Naive thymus-derived CD4-positive, alpha-beta T cell (primary cell): ENCODE measurements at regions of chr2 and their contacts with region 1.

Region 1: DNA sequence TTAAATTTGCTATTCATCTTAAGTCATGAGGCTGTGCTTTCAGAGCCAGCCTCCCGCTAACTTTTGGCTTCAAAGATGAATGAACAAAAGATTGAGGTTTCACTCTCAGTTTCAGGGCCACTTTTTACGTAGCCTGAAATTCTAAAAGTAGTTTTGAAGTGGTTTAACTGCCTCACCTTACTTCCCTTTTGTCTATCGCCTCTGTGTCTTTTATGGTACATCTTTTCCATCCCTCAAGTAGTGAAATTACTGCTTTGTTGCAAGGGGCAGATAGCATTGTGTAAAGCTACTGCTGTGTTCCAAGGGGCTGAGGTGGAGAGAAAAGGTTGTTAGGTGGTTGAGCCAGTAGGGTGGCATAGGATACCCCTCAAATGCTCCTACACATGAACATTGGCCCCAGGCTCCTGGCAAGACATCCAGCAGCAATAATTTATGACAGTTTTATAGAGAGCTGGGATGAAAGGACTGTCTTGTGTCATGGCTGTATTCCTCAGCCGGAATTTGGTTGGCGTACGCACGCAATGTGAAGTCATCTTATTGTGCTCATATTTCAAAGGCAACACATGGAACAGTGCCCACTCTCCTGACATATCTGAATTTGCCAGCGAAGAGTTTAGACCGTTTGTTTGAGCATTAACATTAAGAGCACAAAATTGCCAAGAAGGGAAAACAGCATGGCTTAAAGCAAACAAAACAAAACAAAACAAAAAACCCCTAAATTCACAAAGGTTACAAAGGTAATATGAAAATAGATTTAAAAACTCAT is 32.2 kb downstream of the QPCT start:
- DNase-seq: peak in 8 of 9 donors; percentile 27 to 69 (median 56)
- ATAC-seq: peak; percentile 86
- H3K4me3 ChIP-seq: no peak overlapping the region
- H3K4me3 Mint-ChIP-seq: peak overlapping the region in 9 of 10 donors; percentile 33 to 80 (median 63)
- H3K27ac ChIP-seq: no peak overlapping the region
- H3K27ac Mint-ChIP-seq: peak overlapping the region in 4 of 9 donors; percentile 16 to 65 (median 35)
- H3K4me1 ChIP-seq: peaks cover 13 to 17% of the 10 kb centered on the region in 2 donors
- H3K4me1 Mint-ChIP-seq: peaks cover 11 to 30% (median 17%) of the 10 kb centered on the region in 7 donors
- H3K27me3 ChIP-seq: peaks cover 0 to 6% of the 10 kb centered on the region in 2 donors
- H3K27me3 Mint-ChIP-seq: peaks cover 25 to 66% (median 53%) of the 10 kb centered on the region in 5 donors

Region 2: GRCh38 chr2:37344453-37345361 is 31.9 kb before region 1 on chr2 and contains the start of gene QPCT:
- CTCF ChIA-PET with region 1: no interaction called
- POLR2A ChIA-PET with region 1: interaction called, 3 read pairs
- intact Hi-C with region 1: loop called in 1 of 2 experiments (anchors 2 kb)
- DNase-seq: peak; percentile 25 to 49 (median 44)
- ATAC-seq: peak; percentile 86
- H3K4me3 ChIP-seq: peak within 1 kb of the TSS; percentile 57
- H3K4me3 Mint-ChIP-seq: peak within 1 kb of the TSS; percentile 78 to 89 (median 86)
- H3K27ac ChIP-seq: no peak within 1 kb of the TSS
- H3K27ac Mint-ChIP-seq: peak within 1 kb of the TSS in 6 of 9 donors; percentile 9 to 68 (median 50)
- H3K4me1 ChIP-seq: peaks cover 4 to 6% of the 10 kb centered on the region in 2 donors
- H3K4me1 Mint-ChIP-seq: peaks cover 4 to 17% (median 10%) of the 10 kb centered on the region in 7 donors
- H3K27me3 ChIP-seq: no peaks in the 10 kb centered on the region
- H3K27me3 Mint-ChIP-seq: peaks cover 1 to 83% (median 17%) of the 10 kb centered on the region in 5 donors
- total RNA-seq, gene QPCT: 0.36 to 15.1 (median 0.86) TPM

Region 3: GRCh38 chr2:37365669-37366068 is 10.9 kb before region 1 on chr2:
- CTCF ChIA-PET with region 1: no interaction called
- POLR2A ChIA-PET with region 1: interaction called, 3 read pairs
- intact Hi-C with region 1: loop called in 1 of 2 experiments (anchors 1 kb)
- DNase-seq: no peak
- ATAC-seq: peak; percentile 34
- H3K4me3 ChIP-seq: no peak overlapping the region
- H3K4me3 Mint-ChIP-seq: no peak overlapping the region
- H3K27ac ChIP-seq: no peak overlapping the region
- H3K27ac Mint-ChIP-seq: no peak overlapping the region
- H3K4me1 ChIP-seq: peaks cover 14 to 21% of the 10 kb centered on the region in 2 donors
- H3K4me1 Mint-ChIP-seq: peaks cover 0 to 22% (median 12%) of the 10 kb centered on the region in 7 donors
- H3K27me3 ChIP-seq: no peaks in the 10 kb centered on the region
- H3K27me3 Mint-ChIP-seq: peaks cover 6 to 55% (median 24%) of the 10 kb centered on the region in 5 donors